Activated CD8-positive, alpha-beta T cell treated with anti-CD3 and anti-CD28 coated beads for 36 hours (primary cell): ENCODE measurements at regions of chr10 and their contacts with region 1.

Region 1: GRCh38 chr10:70461215-70461986 is 17.2 kb upstream of the PALD1 start:
- DNase-seq: peak; percentile 69
- ATAC-seq: peak; percentile 75
- H3K4me3 Mint-ChIP-seq: no peak overlapping the region
- H3K27ac Mint-ChIP-seq: no peak overlapping the region
- H3K4me1 Mint-ChIP-seq: peaks cover 4% of the 10 kb centered on the region
- H3K27me3 Mint-ChIP-seq: peaks cover 35% of the 10 kb centered on the region
- CTCF ChIP-seq: peak; percentile 85

Region 2: DNA sequence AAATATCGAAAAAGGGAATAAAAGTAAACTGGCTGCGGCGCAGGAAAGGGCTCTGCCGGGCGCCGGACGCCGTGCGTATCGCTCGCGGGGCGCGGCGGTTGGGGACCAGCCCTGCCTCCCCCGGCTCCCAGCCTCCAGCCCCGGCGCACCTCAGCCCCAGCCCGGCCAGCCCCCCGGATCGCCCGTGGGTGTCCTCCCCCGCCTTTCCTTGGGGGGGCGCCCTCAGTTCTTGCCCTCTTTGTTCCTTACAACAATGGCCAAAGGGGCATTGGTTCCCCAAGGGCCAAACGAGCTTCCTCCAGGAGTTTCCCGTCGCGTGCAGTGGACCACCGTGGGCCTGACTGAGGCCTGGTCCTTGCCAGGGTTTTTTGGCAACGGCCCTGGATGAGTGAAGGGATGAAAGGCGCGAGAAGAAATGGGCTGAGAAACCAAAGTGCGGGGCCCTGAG is 407.5 kb before region 1 on chr10:
- CTCF ChIA-PET with region 1: no interaction called
- POLR2A ChIA-PET with region 1: no interaction called
- intact Hi-C with region 1: no loop called
- DNase-seq: peak; percentile 41
- ATAC-seq: peak; percentile 58
- H3K4me3 Mint-ChIP-seq: peak overlapping the region; percentile 78
- H3K27ac Mint-ChIP-seq: no peak overlapping the region
- H3K4me1 Mint-ChIP-seq: peaks cover 7% of the 10 kb centered on the region
- H3K27me3 Mint-ChIP-seq: peaks cover 44% of the 10 kb centered on the region
- CTCF ChIP-seq: peak; percentile 15

Region 3: DNA sequence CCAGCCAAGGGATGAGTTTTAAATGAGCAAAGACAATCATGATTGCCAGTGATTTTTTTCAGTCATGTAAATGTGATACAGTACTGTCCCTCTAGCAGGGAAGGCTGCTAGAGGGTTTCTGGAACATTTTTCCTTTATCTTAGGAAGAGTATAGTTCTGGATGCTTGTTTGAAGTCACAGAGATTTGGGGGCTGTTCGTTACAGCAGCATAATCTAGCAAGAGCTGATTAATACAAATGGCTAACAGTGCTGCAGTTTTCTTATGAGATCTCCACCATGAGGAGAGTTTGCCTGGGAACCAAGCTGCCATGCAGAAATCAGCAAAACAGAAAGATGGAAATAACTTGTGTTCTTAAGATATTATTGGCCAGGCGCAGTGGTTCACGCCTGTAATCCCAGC is 220.3 kb before region 1 on chr10:
- CTCF ChIA-PET with region 1: no interaction called
- POLR2A ChIA-PET with region 1: no interaction called
- intact Hi-C with region 1: no loop called
- DNase-seq: no peak
- ATAC-seq: no peak
- H3K4me3 Mint-ChIP-seq: no peak overlapping the region
- H3K27ac Mint-ChIP-seq: no peak overlapping the region
- H3K4me1 Mint-ChIP-seq: peaks cover 7% of the 10 kb centered on the region
- H3K27me3 Mint-ChIP-seq: no peaks in the 10 kb centered on the region
- CTCF ChIP-seq: no peak

Region 4: GRCh38 chr10:70381471-70382421 is 79.7 kb before region 1 on chr10:
- CTCF ChIA-PET with region 1: interaction called, 13 read pairs
- POLR2A ChIA-PET with region 1: no interaction called
- intact Hi-C with region 1: no loop called
- DNase-seq: peak; percentile 51
- ATAC-seq: peak; percentile 42
- H3K4me3 Mint-ChIP-seq: peak overlapping the region; percentile 84
- H3K27ac Mint-ChIP-seq: peak overlapping the region; percentile 32
- H3K4me1 Mint-ChIP-seq: peaks cover 3% of the 10 kb centered on the region
- H3K27me3 Mint-ChIP-seq: no peaks in the 10 kb centered on the region
- CTCF ChIP-seq: peak; percentile 31

Region 5: DNA sequence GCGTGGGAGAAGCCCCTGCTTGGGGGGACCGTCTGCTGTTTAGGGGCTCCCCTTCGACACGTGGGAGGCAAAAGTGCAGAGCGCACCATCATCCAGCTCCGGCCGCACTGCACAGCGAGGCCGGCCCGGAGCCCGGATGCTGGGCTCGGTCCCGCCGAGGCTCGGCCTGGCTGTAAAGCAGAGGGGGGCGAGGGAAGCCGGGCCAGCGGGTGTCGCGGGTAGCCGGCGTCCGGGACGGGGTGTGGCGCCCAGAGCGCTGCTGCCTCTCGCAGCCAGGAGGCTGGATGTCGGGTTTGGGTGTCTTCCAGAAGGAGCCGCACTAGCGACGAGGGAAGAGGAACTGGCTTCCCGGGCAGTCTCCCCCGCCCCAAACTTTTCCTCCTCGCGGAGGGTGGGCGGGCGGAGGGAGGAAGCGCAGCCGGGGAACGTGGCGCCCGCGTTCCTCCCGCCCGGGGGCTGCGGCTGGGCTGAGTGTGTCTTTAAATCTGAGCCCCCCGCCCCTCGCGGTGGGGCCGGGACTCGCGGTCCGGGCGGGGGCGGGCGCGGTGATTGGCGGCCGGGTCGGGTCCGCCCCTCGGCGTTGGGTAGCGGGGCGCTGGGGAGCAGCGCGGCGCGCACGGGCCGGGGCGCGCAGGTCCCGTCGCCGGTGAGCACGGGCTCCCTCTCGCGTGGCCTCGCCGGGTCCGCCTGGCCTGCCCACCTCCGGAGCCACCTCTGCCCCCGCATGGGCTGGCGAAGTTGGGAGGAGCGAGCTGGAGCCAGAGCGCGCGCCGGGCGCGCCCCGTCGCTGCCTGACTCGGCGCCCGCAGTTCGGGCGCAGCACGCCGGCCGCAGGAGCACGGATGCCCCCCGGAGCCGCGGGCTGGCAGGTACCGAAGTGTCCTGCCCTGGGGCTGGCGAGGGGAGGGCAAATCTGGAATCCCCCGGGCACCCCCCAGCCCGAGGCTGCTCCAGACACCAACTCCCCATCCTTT is 17.1 kb after region 1 on chr10 and contains the start of gene PALD1:
- CTCF ChIA-PET with region 1: interaction called, 30 read pairs
- POLR2A ChIA-PET with region 1: interaction called, 8 read pairs
- intact Hi-C with region 1: no loop called
- DNase-seq: peak; percentile 68
- ATAC-seq: peak; percentile 55
- H3K4me3 Mint-ChIP-seq: peak within 1 kb of the TSS; percentile 72
- H3K27ac Mint-ChIP-seq: peak within 1 kb of the TSS; percentile 55
- H3K4me1 Mint-ChIP-seq: peaks cover 48% of the 10 kb centered on the region
- H3K27me3 Mint-ChIP-seq: peaks cover 17% of the 10 kb centered on the region
- CTCF ChIP-seq: no peak
- total RNA-seq, gene PALD1: 6.6 to 6.8 TPM

Region 6: DNA sequence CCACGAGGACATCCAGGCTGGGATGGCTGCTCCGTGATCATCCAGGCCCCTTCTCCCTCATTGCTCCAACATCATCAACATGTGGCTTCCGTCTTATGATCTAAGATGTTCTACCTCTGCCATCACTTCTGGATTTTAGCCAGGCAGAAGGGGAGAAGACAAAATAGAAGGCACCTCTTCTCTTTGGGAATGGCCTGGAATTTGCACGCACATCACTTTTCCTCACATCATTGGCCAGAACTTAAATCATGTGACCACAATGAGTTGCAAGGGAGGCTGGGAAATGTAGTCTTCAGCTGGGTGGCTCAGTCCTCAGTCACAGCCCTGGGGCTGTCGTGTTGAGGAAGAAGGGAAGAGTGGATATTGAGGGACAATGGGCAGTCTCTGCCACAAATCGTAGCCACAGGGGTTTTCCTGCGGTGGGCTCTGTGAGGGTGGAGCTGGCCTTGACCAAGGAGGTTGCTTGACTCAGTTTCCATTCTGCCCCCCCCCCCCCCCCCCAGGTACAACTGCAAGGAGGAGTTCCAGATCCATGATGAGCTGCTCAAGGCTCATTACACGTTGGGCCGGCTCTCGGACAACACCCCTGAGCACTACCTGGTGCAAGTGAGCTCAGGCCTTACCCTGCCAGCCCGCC is 67.4 kb after region 1 on chr10:
- CTCF ChIA-PET with region 1: interaction called, 12 read pairs
- POLR2A ChIA-PET with region 1: no interaction called
- intact Hi-C with region 1: no loop called
- DNase-seq: peak; percentile 16
- ATAC-seq: peak; percentile 62
- H3K4me3 Mint-ChIP-seq: no peak overlapping the region
- H3K27ac Mint-ChIP-seq: no peak overlapping the region
- H3K4me1 Mint-ChIP-seq: no peaks in the 10 kb centered on the region
- H3K27me3 Mint-ChIP-seq: no peaks in the 10 kb centered on the region
- CTCF ChIP-seq: no peak

Region 7: DNA sequence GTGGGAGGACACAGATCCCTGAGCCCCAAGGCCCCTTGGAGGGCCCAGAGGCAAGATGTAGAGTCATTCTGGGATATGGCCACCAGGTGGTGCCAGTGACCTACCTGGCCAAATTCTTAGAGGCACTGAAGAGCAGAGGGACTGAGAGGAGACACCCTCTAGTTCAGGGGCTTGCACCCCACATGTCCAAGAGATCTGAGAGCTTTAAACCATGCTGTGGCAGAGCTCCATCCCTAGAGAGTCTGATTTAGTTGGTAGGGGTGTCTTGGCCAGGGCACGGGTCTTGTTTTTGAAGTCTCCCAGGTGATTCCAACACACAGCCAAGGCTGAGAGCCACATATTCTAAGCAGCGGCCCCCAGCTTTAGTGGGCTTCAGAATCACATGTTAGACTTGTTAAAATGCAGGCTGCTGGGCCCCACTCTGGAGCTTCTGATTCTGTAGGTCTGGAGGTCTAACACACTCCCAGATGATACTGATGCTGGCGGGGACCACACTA is 88.6 kb after region 1 on chr10:
- CTCF ChIA-PET with region 1: interaction called, 10 read pairs
- POLR2A ChIA-PET with region 1: interaction called, 3 read pairs
- intact Hi-C with region 1: no loop called
- DNase-seq: peak; percentile 87
- ATAC-seq: peak; percentile 96
- H3K4me3 Mint-ChIP-seq: no peak overlapping the region
- H3K27ac Mint-ChIP-seq: no peak overlapping the region
- H3K4me1 Mint-ChIP-seq: no peaks in the 10 kb centered on the region
- H3K27me3 Mint-ChIP-seq: no peaks in the 10 kb centered on the region
- CTCF ChIP-seq: peak; percentile 86